Activated CD8-positive, alpha-beta T cell treated with anti-CD3 and anti-CD28 coated beads for 36 hours (primary cell): ENCODE measurements at regions of chr11 and their contacts with region 1.

Region 1: DNA sequence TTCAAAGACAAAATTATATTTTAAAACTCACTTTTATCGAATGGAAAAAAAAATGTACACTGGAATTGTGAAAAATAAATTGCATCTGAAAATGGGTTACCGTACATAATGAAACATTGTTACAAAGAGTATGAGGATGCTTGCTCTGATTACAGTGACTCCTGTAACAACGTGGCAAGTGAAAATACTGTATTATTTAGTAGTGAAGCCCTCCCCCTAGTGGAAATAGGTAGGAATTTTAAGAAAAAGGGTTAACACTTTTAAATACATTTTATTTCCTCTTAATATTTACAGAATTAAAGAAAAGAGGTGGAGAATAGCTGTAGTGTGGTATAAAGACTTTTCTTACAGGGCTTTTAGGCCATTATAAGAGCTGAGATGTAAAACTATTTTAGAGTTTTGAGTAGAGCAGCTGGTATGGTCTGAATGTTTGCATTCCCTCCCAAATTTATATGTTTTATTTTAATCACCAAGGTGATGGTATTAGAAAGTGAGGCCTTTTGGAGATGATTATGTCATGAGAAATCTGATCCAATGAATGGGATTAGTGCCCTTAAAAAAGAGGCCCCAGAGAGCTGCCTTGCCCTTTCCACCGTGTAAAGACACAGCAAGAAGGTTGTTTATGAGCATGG is 25.2 kb downstream of the FAM76B start:
- DNase-seq: no peak
- ATAC-seq: peak; percentile 84
- H3K4me3 Mint-ChIP-seq: no peak overlapping the region
- H3K27ac Mint-ChIP-seq: no peak overlapping the region
- H3K4me1 Mint-ChIP-seq: no peaks in the 10 kb centered on the region
- H3K27me3 Mint-ChIP-seq: peaks cover 3% of the 10 kb centered on the region
- CTCF ChIP-seq: peak; percentile 76

Region 2: GRCh38 chr11:95279921-95280868 is 484.2 kb before region 1 on chr11:
- CTCF ChIA-PET with region 1: no interaction called
- POLR2A ChIA-PET with region 1: no interaction called
- intact Hi-C with region 1: no loop called
- DNase-seq: no peak
- ATAC-seq: no peak
- H3K4me3 Mint-ChIP-seq: no peak overlapping the region
- H3K27ac Mint-ChIP-seq: no peak overlapping the region
- H3K4me1 Mint-ChIP-seq: peaks cover 2% of the 10 kb centered on the region
- H3K27me3 Mint-ChIP-seq: no peaks in the 10 kb centered on the region
- CTCF ChIP-seq: no peak

Region 3: GRCh38 chr11:95516786-95517185 is 247.6 kb before region 1 on chr11:
- CTCF ChIA-PET with region 1: no interaction called
- POLR2A ChIA-PET with region 1: no interaction called
- intact Hi-C with region 1: no loop called
- DNase-seq: no peak
- ATAC-seq: no peak
- H3K4me3 Mint-ChIP-seq: no peak overlapping the region
- H3K27ac Mint-ChIP-seq: no peak overlapping the region
- H3K4me1 Mint-ChIP-seq: no peaks in the 10 kb centered on the region
- H3K27me3 Mint-ChIP-seq: no peaks in the 10 kb centered on the region
- CTCF ChIP-seq: no peak

Region 4: GRCh38 chr11:95751515-95751914 is 12.9 kb before region 1 on chr11:
- CTCF ChIA-PET with region 1: interaction called, 23 read pairs
- POLR2A ChIA-PET with region 1: no interaction called
- intact Hi-C with region 1: no loop called
- DNase-seq: no peak
- ATAC-seq: no peak
- H3K4me3 Mint-ChIP-seq: no peak overlapping the region
- H3K27ac Mint-ChIP-seq: no peak overlapping the region
- H3K4me1 Mint-ChIP-seq: no peaks in the 10 kb centered on the region
- H3K27me3 Mint-ChIP-seq: peaks cover 7% of the 10 kb centered on the region
- CTCF ChIP-seq: no peak

Region 5: GRCh38 chr11:95778699-95779098 is 14.3 kb after region 1 on chr11:
- CTCF ChIA-PET with region 1: interaction called, 10 read pairs
- POLR2A ChIA-PET with region 1: interaction called, 3 read pairs
- intact Hi-C with region 1: no loop called
- DNase-seq: no peak
- ATAC-seq: no peak
- H3K4me3 Mint-ChIP-seq: no peak overlapping the region
- H3K27ac Mint-ChIP-seq: no peak overlapping the region
- H3K4me1 Mint-ChIP-seq: peaks cover 27% of the 10 kb centered on the region
- H3K27me3 Mint-ChIP-seq: no peaks in the 10 kb centered on the region
- CTCF ChIP-seq: no peak